A673 (cell line): ENCODE measurements at regions of chr10 and their contacts with region 1.

Region 1: GRCh38 chr10:100710151-100710871 is 35.1 kb upstream of the PAX2 start:
- DNase-seq: no peak
- H3K4me3 ChIP-seq: peak overlapping the region; percentile 23
- H3K27ac ChIP-seq: no peak overlapping the region
- H3K4me1 ChIP-seq: no peaks in the 10 kb centered on the region
- H3K27me3 ChIP-seq: peaks cover 66% of the 10 kb centered on the region
- CTCF ChIP-seq: no peak

Region 2: GRCh38 chr10:100338434-100339036 is 371.8 kb before region 1 on chr10:
- CTCF ChIA-PET with region 1: interaction called, 10 read pairs
- POLR2A ChIA-PET with region 1: no interaction called
- intact Hi-C with region 1: no loop called
- DNase-seq: peak; percentile 79
- H3K4me3 ChIP-seq: no peak overlapping the region
- H3K27ac ChIP-seq: no peak overlapping the region
- H3K4me1 ChIP-seq: no peaks in the 10 kb centered on the region
- H3K27me3 ChIP-seq: no peaks in the 10 kb centered on the region
- CTCF ChIP-seq: peak; percentile 88